Heart right ventricle (tissue), 16 donors: ENCODE measurements at regions of chr17 and their contacts with region 1.

Region 1: DNA sequence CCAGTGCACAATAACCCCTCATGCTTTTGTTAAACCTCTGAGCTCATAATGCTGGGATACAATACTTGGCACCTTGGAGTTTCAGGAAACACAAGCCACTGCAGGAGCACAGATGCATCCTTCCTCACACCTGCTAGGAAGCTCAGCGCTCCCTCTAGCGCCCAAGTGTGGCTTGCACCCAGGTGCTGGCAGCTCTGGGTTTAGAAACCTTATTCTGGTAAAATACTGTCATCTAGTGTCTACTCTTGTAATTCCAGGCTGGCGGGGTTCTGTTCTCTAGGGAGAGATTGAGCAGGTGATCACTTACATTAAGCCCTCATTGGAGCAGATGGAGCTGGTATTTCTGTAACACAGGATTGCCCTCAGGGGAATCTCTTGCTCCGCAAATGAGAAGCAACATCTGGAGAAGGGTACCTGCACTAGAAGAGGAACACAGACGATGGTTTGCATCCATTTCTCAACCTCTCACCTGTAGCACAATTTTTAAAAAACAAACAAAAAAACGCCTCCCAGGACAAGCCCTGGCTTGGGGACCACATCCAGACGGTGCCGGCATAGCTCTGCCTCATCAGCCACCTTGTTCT is 1.5 kb downstream of the CCL1 start:
- DNase-seq: peak; percentile 90 to 91
- ATAC-seq: peak; percentile 86 to 96 (median 90)
- H3K4me3 ChIP-seq: no peak overlapping the region
- H3K27ac ChIP-seq: no peak overlapping the region
- H3K4me1 ChIP-seq: peaks cover 0 to 22% (median 6%) of the 10 kb centered on the region in 9 donors
- H3K27me3 ChIP-seq: peaks cover 0 to 30% (median 0%) of the 10 kb centered on the region in 7 donors
- CTCF ChIP-seq: peak; percentile 98 to 100 (median 100)

Region 2: GRCh38 chr17:33779225-33779591 is 582.4 kb before region 1 on chr17:
- intact Hi-C with region 1: loop called in 3 of 10 experiments (anchors 5 to 10 kb)
- DNase-seq: peak in 1 of 2 donors; percentile 34
- ATAC-seq: no peak
- H3K4me3 ChIP-seq: no peak overlapping the region
- H3K27ac ChIP-seq: no peak overlapping the region
- H3K4me1 ChIP-seq: no peaks in the 10 kb centered on the region
- H3K27me3 ChIP-seq: peaks cover 0 to 55% (median 21%) of the 10 kb centered on the region in 7 donors
- CTCF ChIP-seq: peak; percentile 90 to 98 (median 94)

Region 3: GRCh38 chr17:34199932-34200534 is 161.5 kb before region 1 on chr17:
- intact Hi-C with region 1: loop called (anchors 1 to 2 kb)
- DNase-seq: peak; percentile 38 to 81
- ATAC-seq: peak; percentile 88 to 97 (median 90)
- H3K4me3 ChIP-seq: no peak overlapping the region
- H3K27ac ChIP-seq: peak overlapping the region in 2 of 10 donors; percentile 30 to 72
- H3K4me1 ChIP-seq: peaks cover 0 to 28% (median 6%) of the 10 kb centered on the region in 9 donors
- H3K27me3 ChIP-seq: peaks cover 0 to 37% (median 3%) of the 10 kb centered on the region in 7 donors
- CTCF ChIP-seq: peak; percentile 100

Region 4: GRCh38 chr17:34241062-34241461 is 120.5 kb before region 1 on chr17:
- intact Hi-C with region 1: no loop called
- DNase-seq: peak; percentile 85 to 88
- ATAC-seq: peak; percentile 72 to 90 (median 88)
- H3K4me3 ChIP-seq: no peak overlapping the region
- H3K27ac ChIP-seq: peak overlapping the region in 9 of 10 donors; percentile 23 to 93 (median 68)
- H3K4me1 ChIP-seq: peaks cover 6 to 100% (median 75%) of the 10 kb centered on the region in 9 donors
- H3K27me3 ChIP-seq: no peaks in the 10 kb centered on the region
- CTCF ChIP-seq: no peak

Region 5: GRCh38 chr17:34306466-34306865 is 55.1 kb before region 1 on chr17:
- intact Hi-C with region 1: loop called in 7 of 10 experiments (anchors 1 to 5 kb)
- DNase-seq: peak in 1 of 2 donors; percentile 48
- ATAC-seq: peak; percentile 68 to 86 (median 80)
- H3K4me3 ChIP-seq: no peak overlapping the region
- H3K27ac ChIP-seq: peak overlapping the region in 5 of 10 donors; percentile 2 to 69 (median 30)
- H3K4me1 ChIP-seq: peaks cover 0 to 64% (median 32%) of the 10 kb centered on the region in 9 donors
- H3K27me3 ChIP-seq: peaks cover 0 to 5% (median 0%) of the 10 kb centered on the region in 7 donors
- CTCF ChIP-seq: peak in 8 of 9 donors; percentile 45 to 69 (median 55)

Region 6: DNA sequence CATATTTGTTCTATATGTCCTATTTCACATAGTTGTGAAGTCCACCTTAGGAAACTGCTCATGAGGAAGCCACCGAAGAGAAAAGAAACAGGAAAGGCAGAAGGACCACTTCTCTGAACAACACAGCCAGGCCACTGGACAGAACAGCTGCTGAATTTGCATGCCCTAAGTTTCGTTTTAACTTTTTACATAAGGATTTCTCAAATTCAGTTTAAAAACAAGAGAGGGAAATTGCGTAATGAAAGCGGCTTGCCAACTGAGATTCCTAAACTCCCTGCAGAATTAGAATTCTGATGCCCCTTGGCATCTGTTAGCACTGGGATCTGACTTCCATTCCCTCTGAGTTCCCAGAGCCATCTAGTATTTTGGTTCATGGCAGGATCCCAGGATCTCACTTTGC is 47.3 kb before region 1 on chr17:
- intact Hi-C with region 1: loop called in 5 of 10 experiments (anchors 5 kb)
- DNase-seq: peak in 1 of 2 donors; percentile 29
- ATAC-seq: peak in 7 of 8 donors; percentile 55 to 65 (median 56)
- H3K4me3 ChIP-seq: no peak overlapping the region
- H3K27ac ChIP-seq: peak overlapping the region; percentile 14 to 83 (median 68)
- H3K4me1 ChIP-seq: peaks cover under 1 to 56% (median 26%) of the 10 kb centered on the region in 9 donors
- H3K27me3 ChIP-seq: peaks cover 0 to 5% (median 0%) of the 10 kb centered on the region in 7 donors
- CTCF ChIP-seq: no peak